HEK293 (cell line): ENCODE measurements at regions of chr17 and their contacts with region 1.

Region 1: GRCh38 chr17:41918314-41919164 is at the start of gene ACLY:
- H3K4me3 ChIP-seq: peak within 1 kb of the TSS; percentile 88
- H3K27ac ChIP-seq: peak within 1 kb of the TSS; percentile 91
- H3K4me1 ChIP-seq: peaks cover 21% of the 10 kb centered on the region
- CTCF ChIP-seq: no peak; the same call in 1 of the 2 replicates

Region 2: GRCh38 chr17:41786227-41787020 is 132.1 kb before region 1 on chr17 and contains the start of gene JUP:
- CTCF ChIA-PET with region 1: interaction called, 3 read pairs
- POLR2A ChIA-PET with region 1: interaction called, 20 read pairs
- H3K4me3 ChIP-seq: peak within 1 kb of the TSS; percentile 61
- H3K27ac ChIP-seq: peak within 1 kb of the TSS; percentile 53; the same call in 1 of the 2 replicates
- H3K4me1 ChIP-seq: peaks cover 12% of the 10 kb centered on the region
- CTCF ChIP-seq: peak; percentile 40

Region 3: DNA sequence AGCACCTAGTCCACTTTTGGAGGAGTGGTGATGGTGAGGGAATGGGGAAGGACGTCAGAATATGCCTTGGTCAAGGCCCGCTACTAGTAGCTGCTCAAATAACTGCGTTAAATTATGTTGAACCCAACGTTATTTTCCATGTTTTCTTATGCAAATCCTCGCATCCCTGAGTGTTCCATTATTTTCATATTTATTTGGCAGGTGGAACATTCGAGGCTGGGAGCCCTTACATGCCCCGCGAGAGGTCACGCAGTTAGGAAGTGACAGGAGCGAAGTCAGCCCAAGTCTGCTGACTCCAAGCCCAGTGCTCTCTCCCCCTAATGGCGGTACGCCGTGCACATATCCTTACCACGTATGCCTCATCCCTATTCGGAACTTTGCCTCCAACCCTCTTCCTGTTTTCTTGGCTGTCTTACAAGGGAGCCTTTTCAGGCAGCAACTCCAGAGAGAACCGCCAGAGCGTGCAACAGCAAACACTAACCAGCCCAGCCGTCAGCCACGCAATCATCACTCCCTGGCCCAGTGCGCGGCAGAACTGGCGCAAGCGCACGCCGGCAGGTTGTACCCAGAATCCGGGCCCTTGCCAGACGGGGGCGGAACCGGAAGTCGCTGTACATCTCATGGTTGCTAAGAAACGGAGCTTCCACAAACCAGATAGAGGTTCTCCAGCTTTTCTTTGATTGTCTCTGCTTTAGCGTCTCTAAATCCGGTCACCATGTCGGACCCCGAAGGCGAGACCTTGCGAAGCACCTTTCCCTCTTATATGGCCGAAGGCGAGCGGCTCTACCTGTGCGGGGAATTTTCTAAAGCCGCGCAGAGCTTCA is 11.7 kb after region 1 on chr17 and contains the start of gene ODAD4:
- CTCF ChIA-PET with region 1: interaction called, 18 read pairs
- POLR2A ChIA-PET with region 1: interaction called, 73 read pairs
- H3K4me3 ChIP-seq: peak within 1 kb of the TSS; percentile 59
- H3K27ac ChIP-seq: peak within 1 kb of the TSS; percentile 54
- H3K4me1 ChIP-seq: peaks cover 4% of the 10 kb centered on the region; the same call in 1 of the 2 replicates
- CTCF ChIP-seq: peak; percentile 90

Region 4: DNA sequence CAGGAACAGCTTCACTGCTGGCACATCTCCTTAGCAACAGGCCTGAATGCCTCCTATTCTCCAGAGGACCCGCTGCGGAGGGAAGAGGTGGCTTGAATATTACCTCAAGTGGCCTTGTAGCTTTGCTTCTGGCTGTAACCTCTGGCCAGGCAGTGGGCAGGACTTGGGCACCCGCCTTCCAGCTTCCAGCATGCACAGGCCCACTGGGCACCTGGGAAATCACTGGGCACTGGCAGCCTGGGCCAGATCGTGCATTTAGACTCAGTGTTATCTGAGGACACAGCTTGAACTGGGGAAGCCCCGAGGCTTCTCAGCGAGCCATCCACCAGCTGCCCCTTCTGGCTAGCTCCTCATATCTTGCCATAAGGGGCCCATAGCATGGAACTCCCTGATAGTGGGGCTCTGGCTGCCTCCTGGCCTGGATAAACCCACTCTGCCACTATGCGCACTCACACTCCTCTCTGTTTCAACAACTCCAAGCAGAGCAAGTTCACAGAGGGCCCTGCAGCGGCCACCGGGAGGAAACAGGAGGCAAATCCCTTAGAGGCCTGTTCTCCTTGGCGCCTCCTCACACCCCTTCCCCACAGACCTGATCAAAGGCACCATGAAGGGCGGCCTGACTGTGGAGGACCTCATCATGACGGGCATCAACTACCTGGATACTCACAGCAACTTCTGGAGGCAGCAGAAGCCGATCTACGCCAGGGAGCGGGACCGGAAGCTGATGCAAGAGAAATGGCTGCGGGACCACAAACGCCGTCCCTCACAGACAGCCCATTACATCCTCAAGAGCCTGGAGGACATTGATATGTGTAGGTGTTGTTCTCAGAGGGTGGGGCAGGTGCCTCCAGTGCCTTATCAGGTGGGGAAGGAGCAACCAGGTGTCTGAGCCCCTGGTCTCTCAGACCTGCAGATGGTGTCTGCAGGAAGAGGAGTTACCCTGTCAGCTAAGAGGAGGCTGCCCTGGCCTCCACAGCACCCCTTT is 19.7 kb after region 1 on chr17:
- CTCF ChIA-PET with region 1: interaction called, 3 read pairs
- POLR2A ChIA-PET with region 1: interaction called, 13 read pairs
- H3K4me3 ChIP-seq: no peak overlapping the region
- H3K27ac ChIP-seq: no peak overlapping the region
- H3K4me1 ChIP-seq: no peaks in the 10 kb centered on the region
- CTCF ChIP-seq: no peak

Region 5: GRCh38 chr17:41959336-41960095 is 41.0 kb after region 1 on chr17:
- CTCF ChIA-PET with region 1: interaction called, 16 read pairs
- POLR2A ChIA-PET with region 1: interaction called, 25 read pairs
- H3K4me3 ChIP-seq: no peak overlapping the region
- H3K27ac ChIP-seq: 0 out of 2 replicates have a peak overlapping the region, but pooled peaks have one; percentile 4
- H3K4me1 ChIP-seq: peaks cover 4% of the 10 kb centered on the region; the same call in 1 of the 2 replicates
- CTCF ChIP-seq: peak; percentile 65

Region 6: DNA sequence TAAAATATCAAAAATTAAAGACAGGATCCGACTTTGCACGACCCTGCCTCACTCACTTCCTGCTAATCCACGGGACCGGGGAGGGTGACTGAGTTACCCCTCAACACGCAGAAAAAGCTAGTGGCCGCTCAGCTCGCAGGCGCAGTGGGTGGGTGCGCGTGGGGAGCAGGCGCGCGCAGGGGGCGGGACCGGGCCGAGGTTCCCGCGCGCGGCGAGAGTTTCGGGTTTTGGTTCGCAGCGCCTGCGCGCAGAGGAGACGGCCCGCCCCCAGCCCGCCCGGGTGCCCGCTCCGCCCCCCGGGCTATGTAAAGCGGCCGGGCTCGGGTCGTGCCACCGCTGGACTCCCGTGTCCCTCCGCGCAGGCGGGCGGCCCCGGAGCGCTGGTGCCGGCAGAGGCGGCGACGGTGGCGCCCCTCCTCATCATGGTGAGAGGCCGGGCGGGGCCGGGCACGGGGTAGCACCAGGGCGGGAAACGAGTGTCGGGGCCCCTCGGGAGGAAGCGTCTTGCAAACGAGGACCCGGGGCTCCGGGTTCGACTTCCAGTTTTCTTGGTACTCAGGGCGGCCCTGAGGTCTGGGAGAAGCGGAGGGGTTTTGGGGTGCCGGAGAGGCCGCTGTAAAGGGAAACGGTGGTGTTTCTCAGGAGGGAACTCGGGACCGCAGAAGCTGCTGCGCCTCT is 48.1 kb after region 1 on chr17 and contains the start of gene CNP:
- CTCF ChIA-PET with region 1: interaction called, 5 read pairs
- POLR2A ChIA-PET with region 1: interaction called, 19 read pairs
- H3K4me3 ChIP-seq: peak within 1 kb of the TSS; percentile 76
- H3K27ac ChIP-seq: peak within 1 kb of the TSS; percentile 89
- H3K4me1 ChIP-seq: 0 out of 2 replicates have a peak, but pooled peaks cover 4% of the 10 kb centered on the region
- CTCF ChIP-seq: no peak